Activated CD4-positive, alpha-beta T cell treated with anti-CD3 and anti-CD28 coated beads for 36 hours (primary cell): ENCODE measurements at regions of chr20 and their contacts with region 1.

Region 1: DNA sequence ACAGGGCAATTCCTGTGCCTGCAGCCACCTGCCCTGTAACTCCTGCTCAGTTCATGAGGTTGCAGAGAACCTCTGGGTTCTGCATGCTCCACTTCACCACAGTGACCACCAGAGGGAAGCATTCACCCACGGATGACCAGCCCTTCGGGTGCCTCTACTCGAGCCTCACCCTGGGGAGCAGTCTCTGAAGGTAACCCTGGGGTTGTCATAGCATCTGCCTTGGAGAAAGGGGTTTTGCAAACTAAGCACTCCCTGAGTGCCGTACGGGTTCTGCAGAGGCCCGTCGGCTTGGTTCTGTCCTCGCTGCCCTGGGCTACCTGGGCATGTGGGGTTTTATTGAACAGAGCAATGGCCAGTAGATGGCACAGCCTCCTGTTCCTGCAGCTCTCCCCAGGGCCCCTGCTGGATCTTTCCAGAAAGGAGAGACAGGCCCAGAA is 10.2 kb upstream of the CST5 start:
- DNase-seq: peak; percentile 86
- ATAC-seq: peak; percentile 99
- H3K4me3 Mint-ChIP-seq: no peak overlapping the region
- H3K27ac Mint-ChIP-seq: no peak overlapping the region
- H3K4me1 Mint-ChIP-seq: peaks cover 3% of the 10 kb centered on the region
- H3K27me3 Mint-ChIP-seq: no peaks in the 10 kb centered on the region

Region 2: GRCh38 chr20:23702021-23702420 is 187.8 kb before region 1 on chr20:
- CTCF ChIA-PET with region 1: no interaction called
- POLR2A ChIA-PET with region 1: no interaction called
- intact Hi-C with region 1: no loop called
- DNase-seq: no peak
- ATAC-seq: no peak
- H3K4me3 Mint-ChIP-seq: no peak overlapping the region
- H3K27ac Mint-ChIP-seq: no peak overlapping the region
- H3K4me1 Mint-ChIP-seq: no peaks in the 10 kb centered on the region
- H3K27me3 Mint-ChIP-seq: peaks cover 2% of the 10 kb centered on the region

Region 3: DNA sequence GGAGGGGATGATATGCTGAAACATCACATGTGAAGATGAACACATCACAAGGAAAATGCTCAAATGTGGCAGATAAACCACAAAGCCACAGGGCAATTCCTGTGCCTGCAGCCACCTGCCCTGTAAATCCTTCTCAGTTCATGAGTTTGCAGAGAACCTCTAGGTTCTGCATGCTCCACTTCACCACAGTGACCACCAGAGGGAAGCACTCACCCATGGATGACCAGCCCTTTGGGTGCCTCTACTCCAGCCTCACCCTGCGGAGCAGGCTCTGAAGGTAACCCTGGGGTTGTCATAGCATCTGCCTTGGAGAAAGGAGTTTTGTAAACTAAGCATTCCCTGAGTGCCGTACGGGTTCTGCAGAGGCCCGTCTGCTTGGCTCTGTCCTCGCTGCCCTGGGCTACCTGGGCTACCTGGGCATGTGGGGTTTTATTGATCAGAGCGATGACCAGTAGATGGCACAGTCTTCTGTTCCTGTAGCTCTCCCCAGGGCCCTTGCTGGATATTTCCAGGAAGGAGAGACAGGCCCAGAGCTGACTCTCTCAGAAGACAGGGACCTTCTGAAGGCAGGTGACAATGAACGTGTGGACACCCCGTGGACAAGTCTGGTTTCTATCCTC is 107.3 kb before region 1 on chr20:
- CTCF ChIA-PET with region 1: no interaction called
- POLR2A ChIA-PET with region 1: no interaction called
- intact Hi-C with region 1: loop called in 1 of 2 experiments (anchors 5 kb)
- DNase-seq: peak; percentile 12
- ATAC-seq: peak; percentile 71
- H3K4me3 Mint-ChIP-seq: no peak overlapping the region
- H3K27ac Mint-ChIP-seq: no peak overlapping the region
- H3K4me1 Mint-ChIP-seq: no peaks in the 10 kb centered on the region
- H3K27me3 Mint-ChIP-seq: peaks cover 3% of the 10 kb centered on the region

Region 4: GRCh38 chr20:23937303-23938117 is 47.7 kb after region 1 on chr20:
- CTCF ChIA-PET with region 1: interaction called, 15 read pairs
- POLR2A ChIA-PET with region 1: no interaction called
- intact Hi-C with region 1: loop called in 1 of 2 experiments (anchors 2 kb)
- DNase-seq: peak; percentile 74
- ATAC-seq: peak; percentile 90
- H3K4me3 Mint-ChIP-seq: no peak overlapping the region
- H3K27ac Mint-ChIP-seq: no peak overlapping the region
- H3K4me1 Mint-ChIP-seq: no peaks in the 10 kb centered on the region
- H3K27me3 Mint-ChIP-seq: no peaks in the 10 kb centered on the region

Region 5: DNA sequence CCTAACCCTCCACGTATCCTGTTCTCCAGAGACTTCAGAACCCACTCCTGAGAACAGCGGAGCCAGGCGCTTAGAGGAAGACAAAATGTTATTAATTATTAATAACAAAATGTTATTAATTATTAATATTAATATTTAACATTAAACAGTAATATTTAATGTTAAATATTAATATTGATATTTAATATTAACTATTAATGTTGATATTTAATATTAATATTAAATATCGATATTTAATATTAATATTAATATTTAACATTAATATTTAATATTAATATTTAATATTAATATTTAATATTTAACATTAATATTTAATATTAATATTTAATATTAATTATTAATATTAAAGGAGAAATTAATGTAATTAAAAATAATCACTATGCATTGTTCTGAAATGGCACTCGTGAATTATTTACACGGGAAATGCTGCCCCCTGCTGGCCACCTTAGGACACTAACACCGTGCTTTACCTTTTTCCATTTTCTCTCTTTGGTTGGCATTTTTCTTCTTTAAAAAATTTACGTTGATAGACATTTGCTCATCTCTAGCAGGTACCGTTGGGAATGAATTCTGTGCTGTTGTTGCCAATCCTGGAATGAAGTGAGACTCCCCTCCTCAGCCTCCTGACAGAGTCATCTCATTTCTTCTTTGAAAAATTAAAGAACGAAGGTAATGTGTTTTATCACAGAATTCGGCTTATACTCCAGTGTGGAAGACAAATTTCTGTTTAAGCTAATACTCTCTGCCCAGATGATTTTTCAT is 106.3 kb after region 1 on chr20:
- CTCF ChIA-PET with region 1: no interaction called
- POLR2A ChIA-PET with region 1: no interaction called
- intact Hi-C with region 1: loop called (anchors 5 kb)
- DNase-seq: peak; percentile 75
- ATAC-seq: no peak
- H3K4me3 Mint-ChIP-seq: no peak overlapping the region
- H3K27ac Mint-ChIP-seq: no peak overlapping the region
- H3K4me1 Mint-ChIP-seq: no peaks in the 10 kb centered on the region
- H3K27me3 Mint-ChIP-seq: no peaks in the 10 kb centered on the region